K562 (cell line): ENCODE measurements at regions of chr17 and their contacts with region 1.

Region 1: DNA sequence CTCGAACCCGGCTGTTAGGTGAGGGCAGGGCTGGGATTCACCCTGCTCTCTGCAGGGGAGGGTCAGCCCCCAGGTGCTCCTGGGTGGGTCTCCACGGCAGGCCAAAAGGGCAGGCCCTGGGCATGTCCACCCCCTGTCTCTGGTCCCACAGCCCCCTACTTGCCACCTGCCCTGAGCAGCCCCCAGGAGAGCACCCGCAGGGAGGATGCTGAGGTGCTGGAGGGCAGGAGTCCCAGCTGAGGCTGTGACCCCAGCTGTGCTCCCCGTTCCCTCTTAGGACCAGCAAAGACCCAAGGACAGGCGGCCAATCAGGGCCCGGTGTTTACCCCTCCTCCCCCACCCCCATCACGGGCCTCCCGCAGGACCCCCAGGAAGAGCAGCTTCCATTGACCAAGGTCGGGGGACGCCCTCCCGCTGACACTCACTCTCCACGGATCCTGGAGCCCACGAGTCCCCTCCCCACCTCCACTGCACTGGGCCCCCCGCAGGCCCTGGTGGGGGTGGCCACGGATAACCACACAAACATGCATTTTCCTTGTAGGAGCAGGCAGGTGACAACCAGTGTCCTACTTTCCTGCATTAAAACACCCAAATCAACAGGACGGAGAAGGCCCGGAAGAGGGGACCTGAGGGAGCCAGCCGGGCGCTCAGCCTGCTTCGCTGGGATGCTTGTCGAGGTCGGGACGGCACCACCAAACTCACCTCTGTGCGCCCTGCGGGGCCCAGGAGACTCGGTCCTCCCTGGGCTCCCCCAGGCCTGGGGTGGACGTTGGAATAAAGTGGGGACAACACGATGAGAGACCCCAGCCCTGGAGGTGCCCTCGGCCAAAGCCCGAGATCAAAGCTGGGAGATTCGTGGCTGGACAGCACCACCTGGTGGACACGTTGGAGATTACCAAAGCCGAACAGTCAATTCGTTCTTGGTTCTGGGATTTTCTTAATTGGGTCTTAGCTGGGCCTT is 22.5 kb upstream of the ENPP7 start:
- DNase-seq: peak; percentile 62 to 70 (median 67)
- ATAC-seq: peak; percentile 79
- H3K4me3 ChIP-seq: no peak overlapping the region
- H3K27ac ChIP-seq: no peak overlapping the region
- H3K4me1 ChIP-seq: peaks cover 0 to 30% of the 10 kb centered on the region in 2 experiments; a peak in 2 of 5 replicates
- H3K27me3 ChIP-seq: peaks cover 6 to 24% of the 10 kb centered on the region in 2 experiments; a peak in 3 of 5 replicates
- CTCF ChIP-seq: peak; percentile 73 to 82 (median 76)
- EP300 ChIP-seq: no peak
- POLR2A ChIP-seq: no peak
- RAD21 ChIP-seq: peak; percentile 35 to 77

Region 2: GRCh38 chr17:79400989-79401703 is 307.1 kb before region 1 on chr17:
- CTCF ChIA-PET with region 1: no interaction called
- POLR2A ChIA-PET with region 1: no interaction called
- in situ Hi-C with region 1: no loop called
- intact Hi-C with region 1: loop called (anchors 10 kb)
- DNase-seq: peak; percentile 77 to 95 (median 89)
- ATAC-seq: peak; percentile 98
- H3K4me3 ChIP-seq: no peak overlapping the region
- H3K27ac ChIP-seq: no peak overlapping the region
- H3K4me1 ChIP-seq: peaks cover 0 to 7% of the 10 kb centered on the region in 2 experiments; a peak in 3 of 5 replicates
- H3K27me3 ChIP-seq: peaks cover 25 to 74% of the 10 kb centered on the region in 2 experiments; a peak in 4 of 5 replicates
- CTCF ChIP-seq: peak; percentile 80 to 90 (median 88)
- EP300 ChIP-seq: no peak
- POLR2A ChIP-seq: no peak
- RAD21 ChIP-seq: peak in 1 of 2 experiments; percentile 65; a peak in 2 of 4 replicates

Region 3: DNA sequence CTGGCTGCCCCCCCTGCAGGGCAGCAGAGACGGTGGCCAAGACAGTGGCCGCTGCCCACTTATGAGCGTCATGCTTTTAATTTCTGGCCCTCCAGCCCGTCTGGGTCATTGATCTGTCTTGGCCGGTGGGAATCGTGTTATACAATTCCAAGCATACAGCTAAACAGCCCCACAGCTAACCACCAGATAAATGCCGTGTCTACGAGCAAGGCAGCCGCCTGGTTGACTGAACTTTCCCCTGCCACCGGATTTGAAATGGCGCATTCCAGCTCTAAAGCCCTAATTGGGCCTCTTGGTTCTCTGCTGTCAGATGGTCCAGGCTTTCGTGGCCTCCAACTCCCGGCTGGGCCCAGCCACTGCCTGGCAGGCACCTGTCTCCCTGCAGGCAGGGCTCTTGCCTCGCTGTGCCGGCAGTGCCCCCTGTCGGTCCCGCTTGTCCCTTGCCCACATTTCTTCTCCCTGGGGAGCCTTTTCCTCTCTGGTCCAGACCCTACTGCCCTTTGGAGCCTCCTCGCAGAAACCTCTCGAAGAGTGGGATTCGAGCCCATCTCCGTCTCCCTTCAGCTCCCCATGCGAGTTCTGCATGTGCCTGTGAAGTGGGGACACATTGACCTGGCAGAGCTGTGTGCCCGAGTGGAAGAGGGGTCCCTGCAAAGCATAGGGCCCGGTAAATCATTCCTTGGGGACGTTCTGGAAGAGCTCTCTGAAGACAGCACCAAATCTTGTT is 95.6 kb before region 1 on chr17:
- CTCF ChIA-PET with region 1: no interaction called
- POLR2A ChIA-PET with region 1: interaction called, 6 read pairs
- in situ Hi-C with region 1: no loop called
- intact Hi-C with region 1: loop called (anchors 5 kb)
- DNase-seq: peak; percentile 80 to 82 (median 81)
- ATAC-seq: peak; percentile 94
- H3K4me3 ChIP-seq: no peak overlapping the region
- H3K27ac ChIP-seq: no peak overlapping the region
- H3K4me1 ChIP-seq: peaks cover 0 to 12% of the 10 kb centered on the region in 2 experiments; a peak in 2 of 5 replicates
- H3K27me3 ChIP-seq: peaks cover 20 to 64% of the 10 kb centered on the region in 2 experiments
- CTCF ChIP-seq: peak; percentile 77 to 92 (median 86)
- EP300 ChIP-seq: no peak
- POLR2A ChIP-seq: no peak
- RAD21 ChIP-seq: peak; percentile 29 to 83